Ascending aorta (tissue), 2 donors: ENCODE measurements at regions of chr7 and their contacts with region 1.

Region 1: DNA sequence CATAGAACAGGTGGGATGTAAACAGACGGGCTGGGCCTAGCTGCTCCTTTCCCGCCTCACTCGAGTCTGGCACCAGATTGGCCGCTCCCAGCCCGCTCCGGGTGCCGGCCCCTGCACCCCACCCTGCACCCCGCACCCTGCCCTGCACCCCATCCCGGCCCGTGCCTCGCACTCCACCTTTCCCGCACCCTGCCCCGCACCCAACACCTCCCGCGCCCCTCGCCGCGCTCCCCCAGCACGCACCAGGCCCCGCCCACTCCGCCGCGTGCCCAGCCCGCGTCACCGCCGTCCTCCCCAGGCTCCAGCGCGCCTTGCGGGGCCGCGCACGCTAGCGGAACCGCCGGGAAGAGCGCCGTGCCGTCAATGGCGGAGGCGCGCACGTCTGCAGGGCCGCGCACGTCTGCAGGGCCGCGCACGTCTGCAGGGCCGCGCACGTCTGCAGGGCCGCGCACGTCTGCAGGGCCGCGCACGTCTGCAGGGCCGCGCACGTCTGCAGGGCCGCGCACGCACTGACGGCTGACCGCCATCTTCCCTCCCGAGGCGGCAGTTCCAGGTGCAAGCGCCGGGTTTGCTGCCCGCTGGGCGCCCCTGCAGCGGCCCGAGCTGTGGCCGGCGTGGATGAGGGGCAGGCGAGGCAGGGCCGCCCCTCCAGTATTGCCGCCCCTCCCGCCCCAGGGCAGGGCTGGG is at the start of gene UBE3C:
- DNase-seq: peak; percentile 35 to 93
- H3K4me3 ChIP-seq: peak within 1 kb of the TSS; percentile 72 to 94
- H3K27ac ChIP-seq: peak within 1 kb of the TSS; percentile 87 to 90
- H3K4me1 ChIP-seq: peaks cover 9 to 16% of the 10 kb centered on the region in 2 donors
- H3K27me3 ChIP-seq: no peaks in the 10 kb centered on the region
- CTCF ChIP-seq: peak in 1 of 3 experiments; percentile 10
- total RNA-seq, gene UBE3C: 31.7 TPM

Region 2: DNA sequence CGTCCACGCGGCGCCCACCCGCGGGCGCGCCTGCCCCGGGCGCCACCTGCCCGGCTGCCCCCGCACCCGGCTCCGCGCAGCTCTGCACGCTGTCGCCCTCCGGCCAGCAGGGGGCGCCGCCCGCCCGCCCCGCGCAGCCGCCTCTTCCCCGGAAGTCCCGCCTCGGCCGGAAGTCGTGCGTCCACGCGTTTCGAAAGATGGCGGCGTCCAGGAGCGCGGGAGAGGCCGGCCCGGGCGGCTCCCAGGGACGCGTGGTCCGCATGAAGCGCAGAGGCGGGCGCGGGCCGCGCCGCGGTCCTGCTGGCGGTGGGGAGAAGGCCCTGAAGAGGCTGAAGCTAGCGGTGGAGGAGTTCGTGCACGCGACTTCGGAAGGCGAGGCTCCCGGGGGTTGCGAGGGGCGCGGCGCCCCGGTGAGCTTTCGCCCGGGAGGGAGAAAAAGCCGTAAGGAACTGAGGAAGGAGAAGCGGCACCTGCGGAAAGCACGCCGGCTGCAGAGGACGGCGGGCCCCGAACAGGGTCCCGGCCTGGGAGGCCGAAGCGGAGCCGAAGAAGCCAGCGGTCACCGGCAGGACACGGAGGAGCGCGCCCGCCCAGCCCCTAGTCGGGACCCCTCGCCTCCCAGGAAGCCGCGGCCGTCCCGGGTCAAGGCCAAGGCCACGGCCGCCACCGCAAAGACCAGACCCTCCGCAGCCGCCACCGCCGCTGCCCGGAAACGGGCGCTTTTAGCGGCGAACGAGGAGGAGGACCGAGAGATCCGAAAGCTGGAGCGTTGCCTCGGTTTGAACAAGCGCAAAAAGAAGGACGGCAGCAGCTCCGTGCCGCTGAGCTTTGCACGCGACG is 188.8 kb before region 1 on chr7 and contains the start of gene NOM1:
- intact Hi-C with region 1: loop called (anchors 5 kb)
- DNase-seq: peak; percentile 31 to 91
- H3K4me3 ChIP-seq: peak within 1 kb of the TSS; percentile 53 to 99
- H3K27ac ChIP-seq: peak within 1 kb of the TSS in 1 of 2 donors; percentile 41
- H3K4me1 ChIP-seq: peaks cover 10 to 23% of the 10 kb centered on the region in 2 donors
- H3K27me3 ChIP-seq: no peaks in the 10 kb centered on the region
- CTCF ChIP-seq: peak; percentile 59 to 93 (median 62)
- total RNA-seq, gene NOM1: 16.1 TPM

Region 3: GRCh38 chr7:157397731-157398691 is 259.4 kb after region 1 on chr7:
- intact Hi-C with region 1: loop called (anchors 5 kb)
- DNase-seq: peak in 1 of 2 donors; percentile 82
- H3K4me3 ChIP-seq: peak overlapping the region in 1 of 2 donors; percentile 44
- H3K27ac ChIP-seq: peak overlapping the region; percentile 75 to 82
- H3K4me1 ChIP-seq: peaks cover 12 to 15% of the 10 kb centered on the region in 2 donors
- H3K27me3 ChIP-seq: no peaks in the 10 kb centered on the region
- CTCF ChIP-seq: peak in 2 of 3 experiments; percentile 26 to 29